RWPE1 (cell line): ENCODE measurements at regions of chr7 and their contacts with region 1.

Region 1: GRCh38 chr7:27143023-27143949 is at the start of gene HOXA5:
- DNase-seq: peak; percentile 98
- H3K27ac ChIP-seq: peak within 1 kb of the TSS; percentile 90
- CTCF ChIP-seq: peak; percentile 99

Region 2: GRCh38 chr7:26853788-26854393 is 289.4 kb before region 1 on chr7:
- CTCF ChIA-PET with region 1: interaction called, 34 read pairs
- POLR2A ChIA-PET with region 1: no interaction called
- DNase-seq: no peak
- H3K27ac ChIP-seq: no peak overlapping the region
- CTCF ChIP-seq: peak; percentile 83

Region 3: DNA sequence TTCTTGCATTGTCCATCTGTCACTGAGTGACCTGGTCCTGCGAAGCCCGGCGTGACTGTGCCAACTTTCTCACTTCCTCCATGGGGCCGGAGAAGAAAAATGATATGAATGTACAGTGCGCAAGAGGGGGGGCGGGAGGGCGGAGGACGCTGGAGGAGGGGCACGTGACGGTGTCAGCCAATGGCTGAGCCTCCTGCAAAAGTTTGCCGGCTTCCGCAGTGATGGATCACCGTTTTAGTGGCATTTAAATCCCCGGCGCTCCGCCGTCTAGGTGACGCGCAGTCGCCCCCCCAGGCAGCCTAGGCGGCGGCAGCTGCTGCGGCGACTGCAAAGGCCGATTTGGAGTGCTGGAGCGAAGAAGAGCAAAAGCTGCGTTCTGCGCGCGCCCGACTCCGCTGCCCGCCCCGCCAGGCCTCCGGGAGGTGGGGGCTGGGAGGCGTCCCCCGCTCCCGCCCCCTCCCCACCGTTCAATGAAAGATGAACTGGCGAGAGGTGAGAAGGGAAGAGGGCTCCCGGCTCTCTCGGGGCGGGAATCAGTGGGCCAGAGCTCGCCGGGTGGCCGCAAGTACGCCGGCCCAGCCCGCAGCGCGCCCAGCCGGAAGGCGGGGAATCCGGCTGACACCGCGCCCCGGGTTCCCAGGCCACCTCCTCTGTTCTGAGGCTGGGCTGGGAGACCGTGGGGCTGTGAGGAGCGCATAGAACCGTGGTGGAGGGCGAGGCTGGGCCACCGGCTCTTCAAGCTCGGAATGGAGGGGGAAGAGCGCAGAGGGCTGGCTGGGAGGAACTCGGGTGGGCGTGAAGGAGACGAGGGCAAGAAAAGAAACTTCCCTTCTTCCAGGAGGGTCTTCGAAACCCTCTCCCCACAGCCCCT is 47.2 kb before region 1 on chr7 and contains the start of gene HOXA1:
- CTCF ChIA-PET with region 1: interaction called, 13 read pairs
- POLR2A ChIA-PET with region 1: no interaction called
- DNase-seq: peak; percentile 98
- H3K27ac ChIP-seq: peak within 1 kb of the TSS; percentile 95
- CTCF ChIP-seq: no peak

Region 4: DNA sequence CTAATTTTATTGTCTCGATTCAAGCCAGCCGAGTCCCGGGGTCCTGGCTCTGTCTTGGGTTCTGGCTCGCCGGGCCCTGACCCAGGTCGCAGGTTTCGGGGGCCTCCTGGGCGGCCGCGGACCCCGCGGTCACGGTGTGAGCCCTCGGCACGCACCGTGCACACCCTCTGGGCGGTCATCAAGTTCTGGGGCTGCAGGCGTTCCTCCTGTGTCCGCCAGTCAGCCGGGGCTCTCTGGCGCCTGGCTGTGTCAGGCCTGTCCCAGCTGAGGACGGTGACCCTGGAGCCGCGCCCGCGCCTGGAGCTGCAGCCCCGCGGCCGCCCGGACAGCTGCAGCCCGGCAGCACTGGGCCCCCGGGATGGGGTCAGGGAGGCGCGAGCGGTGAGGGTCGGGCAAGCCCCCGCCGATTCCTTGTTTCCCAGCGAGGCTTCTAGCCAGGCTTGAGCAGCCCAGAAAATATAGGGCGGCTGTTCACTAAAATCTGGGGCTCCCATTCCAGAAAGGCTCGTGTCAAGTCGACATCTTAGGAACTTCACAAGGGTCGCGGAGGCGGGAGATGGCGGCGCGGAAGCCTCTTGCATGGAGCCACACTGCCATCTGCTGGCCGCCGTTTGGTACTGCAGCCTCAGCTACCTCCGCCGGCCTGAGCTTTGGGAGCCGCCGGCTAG is 17.4 kb after region 1 on chr7:
- CTCF ChIA-PET with region 1: interaction called, 19 read pairs
- POLR2A ChIA-PET with region 1: interaction called, 3 read pairs
- DNase-seq: no peak
- H3K27ac ChIP-seq: peak overlapping the region; percentile 94
- CTCF ChIP-seq: peak; percentile 99